Body of pancreas (tissue), 4 donors: ENCODE measurements at regions of chr11 and their contacts with region 1.

Region 1: DNA sequence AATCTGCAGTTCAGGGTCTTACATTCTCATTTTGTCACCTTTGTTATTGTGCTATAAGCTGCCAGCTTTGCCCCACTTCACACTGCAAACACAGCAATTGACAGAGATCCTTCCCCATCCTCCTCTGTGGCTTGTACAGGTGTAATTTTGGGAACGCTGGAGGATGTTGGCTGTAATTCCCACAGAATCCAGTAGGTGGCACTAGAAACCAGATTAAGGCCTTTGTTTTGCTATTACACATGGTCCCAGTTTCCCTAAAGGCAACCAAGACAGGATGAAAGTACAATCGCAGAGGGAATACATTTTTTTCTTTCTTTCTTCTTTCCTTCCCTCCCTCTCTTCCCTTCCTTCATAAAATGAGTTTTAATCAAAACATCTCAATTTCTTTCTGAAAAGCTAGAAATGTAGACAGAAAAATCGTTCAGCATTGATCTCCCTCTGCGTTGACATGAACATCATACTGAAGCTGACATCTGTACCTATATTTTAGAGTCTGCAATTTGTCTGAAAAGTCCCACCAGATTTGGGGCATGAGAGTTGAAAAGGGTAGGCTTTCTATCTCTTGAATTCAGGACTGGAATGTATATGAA is 21.3 kb upstream of the NELL1 start:
- DNase-seq: peak; percentile 51 to 58 (median 54)
- ATAC-seq: peak; percentile 63
- H3K4me3 ChIP-seq: no peak overlapping the region
- H3K27ac ChIP-seq: no peak overlapping the region
- H3K4me1 ChIP-seq: no peaks in the 10 kb centered on the region
- H3K27me3 ChIP-seq: no peaks in the 10 kb centered on the region
- CTCF ChIP-seq: peak; percentile 77 to 89 (median 83)
- POLR2A ChIP-seq: no peak

Region 2: DNA sequence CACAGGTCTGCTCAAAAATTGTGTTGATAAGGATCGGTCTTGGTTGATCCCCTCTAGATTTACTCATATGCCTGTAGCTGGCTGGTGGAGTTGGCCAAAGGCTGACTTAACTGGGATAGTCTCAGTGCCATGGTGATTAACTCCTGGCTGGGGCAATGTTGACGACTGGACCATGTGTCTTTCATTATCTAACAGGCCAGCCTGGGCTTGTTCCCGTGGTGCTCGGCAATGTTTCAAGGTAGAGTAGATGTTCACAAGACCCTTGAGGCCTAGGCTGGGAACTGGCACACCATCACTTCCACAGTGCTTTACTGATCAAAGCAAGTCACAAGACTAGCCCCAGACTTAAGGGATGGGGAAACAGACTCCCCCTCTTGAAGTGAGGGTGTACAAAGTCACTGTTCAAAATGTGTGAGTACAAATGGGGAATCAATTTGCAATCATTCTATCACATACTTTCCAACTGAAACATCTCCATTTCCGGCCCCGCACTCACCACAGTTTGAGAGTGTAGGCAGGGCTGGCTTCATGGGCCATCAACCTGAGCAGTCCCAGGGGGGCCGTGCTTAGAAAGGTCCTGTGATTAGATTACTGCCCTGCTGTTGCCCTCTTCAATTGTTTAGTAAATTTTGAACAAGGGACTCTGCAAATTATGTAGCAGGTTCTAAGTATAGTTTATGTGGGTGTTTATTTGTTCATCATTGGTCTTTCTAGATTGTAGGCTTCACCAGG is 262.1 kb after region 1 on chr11:
- intact Hi-C with region 1: no loop called
- DNase-seq: no peak
- ATAC-seq: no peak
- H3K4me3 ChIP-seq: no peak overlapping the region
- H3K27ac ChIP-seq: no peak overlapping the region
- H3K4me1 ChIP-seq: no peaks in the 10 kb centered on the region
- H3K27me3 ChIP-seq: no peaks in the 10 kb centered on the region
- CTCF ChIP-seq: no peak
- POLR2A ChIP-seq: no peak

Region 3: DNA sequence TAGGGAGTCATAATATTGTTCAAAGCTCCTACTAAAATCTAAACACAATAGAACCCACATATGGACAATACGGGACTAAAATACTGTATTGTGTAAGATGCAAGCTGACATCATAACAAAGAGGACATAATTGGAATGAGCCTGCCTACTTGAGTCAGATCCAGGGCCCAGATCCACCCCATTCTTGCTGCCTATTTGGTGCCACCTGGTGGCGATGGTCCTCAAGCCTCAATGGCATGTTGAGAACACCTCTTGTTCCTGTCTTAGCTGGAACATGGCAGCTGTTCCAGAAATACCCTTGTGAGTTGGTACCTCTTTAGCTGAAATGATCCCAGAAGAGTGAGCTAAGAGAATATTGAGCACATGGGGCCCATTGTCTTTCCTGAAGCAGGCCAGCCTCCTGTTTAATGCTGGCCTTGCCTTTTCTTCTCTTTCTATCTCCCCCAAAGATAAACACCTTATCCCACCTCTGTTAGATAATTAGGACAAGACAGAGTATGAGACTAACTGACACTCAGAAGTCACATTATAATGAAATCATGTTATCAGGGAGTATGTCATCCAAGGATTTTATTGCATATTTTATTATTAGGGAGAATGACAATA is 863.9 kb after region 1 on chr11:
- intact Hi-C with region 1: loop called (anchors 5 kb)
- DNase-seq: peak; percentile 70 to 83 (median 72)
- ATAC-seq: peak; percentile 76
- H3K4me3 ChIP-seq: no peak overlapping the region
- H3K27ac ChIP-seq: no peak overlapping the region
- H3K4me1 ChIP-seq: no peaks in the 10 kb centered on the region
- H3K27me3 ChIP-seq: no peaks in the 10 kb centered on the region
- CTCF ChIP-seq: peak; percentile 13 to 58 (median 54)
- POLR2A ChIP-seq: no peak

Region 4: DNA sequence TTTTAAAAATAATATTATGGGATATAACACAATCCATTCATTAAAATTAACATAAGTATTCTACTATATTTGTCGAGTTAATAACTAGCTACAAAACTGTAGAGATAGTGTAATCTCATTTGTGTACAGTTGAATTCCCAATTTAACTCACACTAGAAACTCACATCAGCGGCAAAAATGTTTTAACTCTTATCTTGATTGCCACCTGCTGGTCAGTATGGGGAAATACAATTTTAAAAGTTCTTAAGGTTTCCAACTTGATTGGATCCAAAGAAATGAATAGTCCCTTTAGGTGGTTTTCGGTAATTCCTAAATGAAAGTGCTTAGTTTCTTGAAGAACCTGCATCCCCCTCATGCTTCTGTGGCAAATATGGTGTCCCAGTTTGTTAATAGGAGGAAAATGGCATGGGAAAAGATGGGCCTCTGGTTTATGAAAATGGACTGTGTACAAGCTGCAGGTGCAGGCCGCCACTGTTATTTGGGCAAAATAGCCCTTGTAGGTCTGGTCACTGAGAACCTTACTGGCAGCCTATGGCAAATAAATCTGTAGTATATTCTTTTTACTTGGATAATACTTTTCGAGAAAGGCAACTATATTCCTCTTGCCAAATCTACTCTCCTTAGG is 1656.4 kb after region 1 on chr11:
- intact Hi-C with region 1: loop called (anchors 10 kb)
- DNase-seq: no peak
- ATAC-seq: no peak
- H3K4me3 ChIP-seq: no peak overlapping the region
- H3K27ac ChIP-seq: no peak overlapping the region
- H3K4me1 ChIP-seq: no peaks in the 10 kb centered on the region
- H3K27me3 ChIP-seq: no peaks in the 10 kb centered on the region
- CTCF ChIP-seq: peak; percentile 28 to 76 (median 69)
- POLR2A ChIP-seq: no peak